ENCODE measurements at regions of chr5 and their contacts with region 1.

Region 1: GRCh38 chr5:159341914-159342313 is 11.6 kb upstream of the IL12B start:
- DNase-seq: peak; percentile 50
- H3K4me3 ChIP-seq: no peak overlapping the region
- H3K27me3 ChIP-seq: peaks cover 3% of the 10 kb centered on the region
- CTCF ChIP-seq: no peak

Region 2: DNA sequence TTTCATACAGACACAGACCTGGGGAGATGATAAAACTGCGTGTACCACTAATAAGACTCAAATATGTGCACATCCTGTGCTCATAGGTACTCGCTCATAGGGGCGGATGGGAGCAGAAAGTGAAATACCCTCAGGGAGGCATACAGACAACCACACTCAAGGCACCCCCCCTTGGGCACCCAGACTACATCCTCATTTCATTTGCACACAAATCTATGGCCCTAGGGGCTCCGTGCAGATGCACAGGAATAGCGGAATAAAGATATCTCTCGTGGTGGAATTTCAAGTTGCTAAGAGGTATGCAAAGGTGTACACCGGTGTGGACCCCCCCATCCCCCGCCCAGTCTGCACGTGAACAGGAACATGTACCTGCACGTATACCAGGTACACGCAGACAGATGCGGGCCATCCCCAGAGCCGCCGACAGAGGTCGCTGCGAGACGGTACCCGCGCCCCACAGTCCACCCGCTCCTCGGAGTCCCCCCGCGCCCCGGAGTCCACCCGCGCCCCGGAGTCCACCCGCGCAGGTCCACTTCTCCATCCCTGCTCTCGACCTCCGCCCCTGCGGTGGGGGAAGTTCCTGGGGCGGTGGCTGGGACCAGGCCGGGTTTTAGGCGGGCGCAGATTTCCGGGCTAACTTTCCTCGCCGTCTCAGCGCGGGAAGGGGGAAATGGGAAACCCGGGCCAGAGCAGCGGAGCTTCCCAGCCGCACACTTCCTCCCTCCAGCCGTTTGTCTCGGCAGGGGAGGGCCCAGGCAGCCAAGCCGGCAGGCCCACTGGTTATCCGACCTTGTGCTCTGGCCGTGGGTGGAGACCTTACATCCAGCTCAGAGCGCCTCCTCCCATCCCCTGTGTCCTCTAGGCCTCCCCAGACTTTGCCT is 10.6 kb before region 1 on chr5:
- CTCF ChIA-PET with region 1: interaction called, 12 read pairs
- POLR2A ChIA-PET with region 1: no interaction called
- DNase-seq: no peak
- H3K4me3 ChIP-seq: peak overlapping the region; percentile 48
- H3K27me3 ChIP-seq: no peaks in the 10 kb centered on the region; the same call in 1 of the 2 replicates
- CTCF ChIP-seq: peak; percentile 87